ENCODE measurements at regions of chr4 and their contacts with region 1.

Region 1: DNA sequence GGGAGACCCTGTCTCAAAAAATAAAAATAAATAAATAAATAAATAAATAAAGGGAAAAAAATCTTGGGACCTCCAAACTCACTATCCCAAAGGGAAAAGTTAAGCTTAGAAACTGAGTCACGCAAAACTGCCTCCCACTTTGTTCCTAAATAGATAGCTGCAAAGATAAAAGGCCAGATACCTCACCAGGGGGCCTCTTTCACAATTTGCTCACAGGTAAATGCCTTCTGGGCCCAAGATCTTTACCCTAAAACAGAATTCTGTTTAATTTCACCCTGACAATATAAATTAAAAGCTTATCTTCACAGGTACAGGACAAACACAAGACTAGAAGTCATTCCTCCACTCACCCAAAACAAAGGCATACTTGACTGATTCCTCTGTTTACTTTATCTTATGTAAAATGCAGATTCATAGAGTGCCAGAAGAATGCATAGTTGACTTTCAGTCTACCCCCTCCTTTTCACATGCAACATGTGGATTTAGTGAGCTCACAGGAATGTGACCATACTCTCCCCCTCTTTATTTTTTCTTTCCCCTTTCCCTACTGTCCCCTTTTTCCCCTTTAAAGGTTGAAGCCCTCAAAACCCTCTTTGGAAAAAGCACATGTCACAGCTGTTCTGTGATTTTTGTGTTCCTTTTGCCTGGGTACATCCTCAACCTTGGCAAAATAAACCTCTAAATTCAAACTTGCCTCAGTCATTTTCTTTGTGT is 23.4 kb downstream of the ELF2 start:
- DNase-seq: no peak
- ATAC-seq: peak; percentile 54
- H3K4me3 ChIP-seq: no peak overlapping the region
- H3K27ac ChIP-seq: peak overlapping the region; percentile 55; the same call in 1 of the 3 replicates
- H3K4me1 ChIP-seq: peaks cover 17 to 19% of the 10 kb centered on the region in 2 experiments; a peak in 4 of 5 replicates
- H3K27me3 ChIP-seq: no peaks in the 10 kb centered on the region
- CTCF ChIP-seq: no peak
- EP300 ChIP-seq: no peak
- POLR2A ChIP-seq: no peak
- RAD21 ChIP-seq: no peak

Region 2: DNA sequence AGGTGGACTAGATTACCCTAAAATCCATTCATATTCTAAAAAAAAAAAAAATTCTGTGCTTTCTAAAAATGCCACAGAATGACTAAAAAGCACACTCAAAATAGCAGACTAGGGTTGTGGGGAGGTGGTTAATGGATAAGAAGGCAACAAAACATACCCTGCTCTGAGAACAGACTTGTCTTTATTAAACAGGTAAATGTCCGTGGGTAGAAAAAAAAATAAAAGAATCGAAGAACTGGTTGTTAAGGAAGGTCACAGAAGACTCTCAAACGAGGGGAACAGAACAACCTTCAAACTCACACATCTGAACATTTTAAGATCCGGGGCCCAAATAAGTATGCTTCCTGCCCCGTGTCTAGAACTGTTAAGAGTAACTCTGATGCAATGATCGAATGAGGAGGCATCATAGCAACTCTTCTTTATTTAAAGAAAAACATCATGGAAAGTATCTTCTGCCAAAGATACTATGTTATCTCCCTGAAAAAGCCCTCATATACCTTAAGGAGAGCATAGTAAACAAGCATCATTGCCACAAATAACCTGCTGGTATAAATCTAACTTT is 44.9 kb before region 1 on chr4:
- CTCF ChIA-PET with region 1: no interaction called
- POLR2A ChIA-PET with region 1: no interaction called
- in situ Hi-C with region 1: no loop called
- intact Hi-C with region 1: loop called (anchors 5 kb)
- DNase-seq: no peak
- ATAC-seq: peak; percentile 73
- H3K4me3 ChIP-seq: no peak overlapping the region
- H3K27ac ChIP-seq: no peak overlapping the region
- H3K4me1 ChIP-seq: no peaks in the 10 kb centered on the region
- H3K27me3 ChIP-seq: no peaks in the 10 kb centered on the region
- CTCF ChIP-seq: no peak
- EP300 ChIP-seq: no peak
- POLR2A ChIP-seq: no peak
- RAD21 ChIP-seq: no peak

Measured in K562 (cell line).